Endothelial cell of umbilical vein (primary cell): ENCODE measurements at regions of chr2 and their contacts with region 1.

Region 1: DNA sequence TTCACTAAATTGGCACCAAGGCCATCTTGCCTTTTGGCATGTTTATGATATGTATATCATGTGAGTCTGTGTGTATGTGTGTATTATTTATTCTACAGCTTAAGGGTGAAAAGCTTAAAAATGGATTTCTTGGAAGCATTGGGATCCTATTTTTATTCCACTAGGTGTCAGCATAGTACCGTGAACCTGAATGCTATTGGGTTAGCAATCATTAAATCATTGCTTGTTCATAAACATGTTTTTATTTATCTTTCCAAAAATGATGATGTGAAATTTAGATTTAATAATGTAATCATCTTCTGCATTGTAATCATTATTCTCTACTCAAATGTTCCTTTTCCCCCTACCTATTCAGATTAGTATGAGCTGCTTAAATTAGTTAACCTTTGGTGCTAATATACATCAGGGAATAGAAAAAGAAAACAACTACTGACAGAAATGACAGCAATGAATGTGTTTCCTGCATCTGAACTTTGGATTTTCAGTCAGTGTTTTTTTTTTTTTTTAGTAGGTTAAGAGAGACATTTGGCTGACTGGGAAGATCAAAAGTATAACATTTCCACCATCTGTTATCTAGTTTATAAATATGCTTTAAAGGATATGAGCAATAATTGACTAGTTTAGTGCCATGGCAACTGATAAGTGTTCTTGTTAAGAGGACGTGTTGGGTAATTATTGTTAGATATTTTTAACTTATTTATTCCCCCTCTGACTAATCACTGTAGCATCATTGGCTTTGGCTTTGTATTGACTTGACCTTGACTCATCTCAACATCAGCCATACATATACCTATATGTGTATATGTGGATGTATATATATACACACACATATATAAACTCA is 14.1 kb upstream of the ZSWIM2 start:
- DNase-seq: peak; percentile 85
- H3K4me3 ChIP-seq: no peak overlapping the region
- H3K27ac ChIP-seq: peak overlapping the region; percentile 39
- H3K4me1 ChIP-seq: peaks cover 16% of the 10 kb centered on the region
- H3K27me3 ChIP-seq: no peaks in the 10 kb centered on the region
- CTCF ChIP-seq: peak; percentile 36 to 53
- POLR2A ChIP-seq: no peak

Region 2: GRCh38 chr2:186379052-186379451 is 484.0 kb before region 1 on chr2:
- CTCF ChIA-PET with region 1: no interaction called
- POLR2A ChIA-PET with region 1: no interaction called
- dilution Hi-C with region 1: no loop called
- intact Hi-C with region 1: no loop called
- DNase-seq: no peak
- H3K4me3 ChIP-seq: no peak overlapping the region
- H3K27ac ChIP-seq: no peak overlapping the region
- H3K4me1 ChIP-seq: no peaks in the 10 kb centered on the region
- H3K27me3 ChIP-seq: no peaks in the 10 kb centered on the region
- CTCF ChIP-seq: no peak
- POLR2A ChIP-seq: no peak

Region 3: DNA sequence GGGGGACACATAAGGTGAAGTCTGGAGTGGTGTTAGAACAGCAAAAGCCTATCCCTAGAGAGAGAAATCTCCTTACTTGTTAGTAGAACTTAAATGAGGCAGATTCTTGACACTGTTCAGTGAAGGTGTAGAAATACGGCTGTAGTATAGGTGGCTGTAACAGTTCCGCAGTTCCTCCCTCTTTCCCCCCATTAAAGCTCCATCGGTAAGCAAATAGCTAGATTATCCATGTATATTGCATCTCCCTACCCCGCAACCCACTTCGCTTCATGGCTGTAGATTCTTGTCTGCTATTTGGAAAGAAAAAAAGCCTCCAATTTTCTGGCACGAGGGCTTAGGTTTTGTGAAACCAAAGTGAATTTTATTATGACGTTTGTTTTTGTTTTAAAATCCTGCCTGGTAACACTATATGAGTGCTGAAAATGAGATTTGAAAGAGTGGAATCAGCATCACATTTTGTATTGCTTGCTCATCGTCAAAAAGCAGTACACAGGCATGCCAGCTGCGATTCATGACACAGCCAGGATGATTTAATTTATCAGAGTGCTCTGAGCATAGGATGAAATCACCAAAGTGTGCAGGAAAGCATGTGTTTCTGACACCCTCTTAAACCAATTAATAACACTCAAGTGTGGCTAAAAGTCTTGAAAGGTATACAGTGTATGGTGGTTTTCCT is 167.9 kb before region 1 on chr2:
- CTCF ChIA-PET with region 1: no interaction called
- POLR2A ChIA-PET with region 1: no interaction called
- dilution Hi-C with region 1: no loop called
- intact Hi-C with region 1: no loop called
- DNase-seq: peak; percentile 61
- H3K4me3 ChIP-seq: peak overlapping the region; percentile 20 to 63 (median 23)
- H3K27ac ChIP-seq: no peak overlapping the region
- H3K4me1 ChIP-seq: peaks cover 14% of the 10 kb centered on the region
- H3K27me3 ChIP-seq: no peaks in the 10 kb centered on the region
- CTCF ChIP-seq: no peak
- POLR2A ChIP-seq: no peak

Region 4: GRCh38 chr2:186894478-186894877 is 31.4 kb after region 1 on chr2:
- CTCF ChIA-PET with region 1: interaction called, 12 read pairs
- POLR2A ChIA-PET with region 1: no interaction called
- dilution Hi-C with region 1: no loop called
- intact Hi-C with region 1: no loop called
- DNase-seq: peak; percentile 83
- H3K4me3 ChIP-seq: no peak overlapping the region
- H3K27ac ChIP-seq: no peak overlapping the region
- H3K4me1 ChIP-seq: peaks cover 21% of the 10 kb centered on the region
- H3K27me3 ChIP-seq: no peaks in the 10 kb centered on the region
- CTCF ChIP-seq: no peak
- POLR2A ChIP-seq: no peak

Region 5: GRCh38 chr2:186991766-186992417 is 128.8 kb after region 1 on chr2:
- CTCF ChIA-PET with region 1: interaction called, 9 read pairs
- POLR2A ChIA-PET with region 1: no interaction called
- dilution Hi-C with region 1: no loop called
- intact Hi-C with region 1: loop called (anchors 2 kb)
- DNase-seq: peak; percentile 74
- H3K4me3 ChIP-seq: no peak overlapping the region
- H3K27ac ChIP-seq: no peak overlapping the region
- H3K4me1 ChIP-seq: peaks cover 25% of the 10 kb centered on the region
- H3K27me3 ChIP-seq: no peaks in the 10 kb centered on the region
- CTCF ChIP-seq: peak; percentile 0 to 9
- POLR2A ChIP-seq: no peak

Region 6: GRCh38 chr2:187299122-187299906 is 436.2 kb after region 1 on chr2:
- CTCF ChIA-PET with region 1: interaction called, 3 read pairs
- POLR2A ChIA-PET with region 1: no interaction called
- dilution Hi-C with region 1: no loop called
- intact Hi-C with region 1: loop called (anchors 1 kb)
- DNase-seq: peak; percentile 75
- H3K4me3 ChIP-seq: no peak overlapping the region
- H3K27ac ChIP-seq: peak overlapping the region; percentile 70
- H3K4me1 ChIP-seq: peaks cover 40% of the 10 kb centered on the region
- H3K27me3 ChIP-seq: no peaks in the 10 kb centered on the region
- CTCF ChIP-seq: peak; percentile 40 to 47
- POLR2A ChIP-seq: no peak

Region 7: GRCh38 chr2:187453078-187453641 is 590.1 kb after region 1 on chr2:
- CTCF ChIA-PET with region 1: interaction called, 92 read pairs
- POLR2A ChIA-PET with region 1: interaction called, 9 read pairs
- dilution Hi-C with region 1: no loop called
- intact Hi-C with region 1: loop called (anchors 1 kb)
- DNase-seq: peak; percentile 68
- H3K4me3 ChIP-seq: no peak overlapping the region
- H3K27ac ChIP-seq: no peak overlapping the region
- H3K4me1 ChIP-seq: peaks cover 6% of the 10 kb centered on the region
- H3K27me3 ChIP-seq: no peaks in the 10 kb centered on the region
- CTCF ChIP-seq: peak; percentile 10 to 12
- POLR2A ChIP-seq: no peak

Region 8: DNA sequence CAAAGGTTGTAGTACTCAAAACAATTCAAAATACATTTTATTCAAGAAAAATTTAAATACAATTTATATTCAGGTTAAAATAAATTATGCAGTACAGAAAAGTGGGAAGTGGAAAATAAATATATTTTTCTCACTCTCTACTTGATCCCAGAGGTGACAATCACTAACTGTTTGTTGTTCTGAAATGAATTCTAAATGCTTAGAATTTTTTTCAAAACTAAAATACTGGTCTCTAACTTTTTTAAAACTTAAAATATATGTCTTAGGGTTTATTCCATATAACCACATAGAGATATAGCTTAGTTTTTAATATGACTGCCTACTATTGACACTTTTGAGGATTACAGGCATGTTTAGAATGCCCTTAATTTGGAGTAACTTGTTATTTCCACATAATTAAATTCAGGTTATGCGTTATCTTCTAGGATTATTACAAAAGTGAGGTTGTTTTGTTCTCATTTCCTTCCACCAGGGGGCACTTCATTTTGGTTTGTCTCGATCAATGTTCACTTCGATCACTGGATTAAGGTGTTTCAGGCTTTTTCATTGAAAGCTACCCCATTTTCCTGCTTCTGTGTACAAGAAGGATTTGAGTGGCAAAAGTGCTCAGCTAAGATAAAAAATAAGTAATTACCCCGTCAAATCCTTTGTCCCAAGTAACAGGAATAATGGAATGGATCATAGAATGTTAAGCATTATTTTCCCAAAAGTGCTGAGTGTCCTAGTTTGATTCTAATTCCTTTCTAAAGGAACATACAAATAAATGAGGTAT is 718.2 kb after region 1 on chr2:
- CTCF ChIA-PET with region 1: interaction called, 10 read pairs
- POLR2A ChIA-PET with region 1: no interaction called
- dilution Hi-C with region 1: no loop called
- intact Hi-C with region 1: loop called (anchors 2 kb)
- DNase-seq: peak; percentile 67
- H3K4me3 ChIP-seq: peak overlapping the region in 1 of 3 experiments; percentile 34
- H3K27ac ChIP-seq: peak overlapping the region; percentile 78
- H3K4me1 ChIP-seq: peaks cover 23% of the 10 kb centered on the region
- H3K27me3 ChIP-seq: no peaks in the 10 kb centered on the region
- CTCF ChIP-seq: peak; percentile 45 to 46
- POLR2A ChIP-seq: no peak